Endothelial cell of umbilical vein (primary cell): ENCODE measurements at regions of chr3 and their contacts with region 1.

Region 1: GRCh38 chr3:178170698-178171535 is 365.3 kb upstream of the KCNMB2 start:
- DNase-seq: peak; percentile 96
- H3K4me3 ChIP-seq: no peak overlapping the region
- H3K27ac ChIP-seq: peak overlapping the region; percentile 85
- H3K4me1 ChIP-seq: peaks cover 27% of the 10 kb centered on the region
- H3K27me3 ChIP-seq: no peaks in the 10 kb centered on the region
- CTCF ChIP-seq: no peak
- POLR2A ChIP-seq: peak; percentile 91

Region 2: GRCh38 chr3:177197041-177197727 is 973.7 kb before region 1 on chr3 and contains the start of gene TBL1XR1:
- CTCF ChIA-PET with region 1: no interaction called
- POLR2A ChIA-PET with region 1: no interaction called
- dilution Hi-C with region 1: no loop called
- intact Hi-C with region 1: loop called (anchors 1 kb)
- DNase-seq: peak; percentile 91
- H3K4me3 ChIP-seq: peak within 1 kb of the TSS; percentile 84 to 97 (median 95)
- H3K27ac ChIP-seq: peak within 1 kb of the TSS; percentile 93
- H3K4me1 ChIP-seq: peaks cover 32% of the 10 kb centered on the region
- H3K27me3 ChIP-seq: no peaks in the 10 kb centered on the region
- CTCF ChIP-seq: no peak
- POLR2A ChIP-seq: no peak
- total RNA-seq, gene TBL1XR1: 146 and 152 TPM in 2 replicates

Region 3: DNA sequence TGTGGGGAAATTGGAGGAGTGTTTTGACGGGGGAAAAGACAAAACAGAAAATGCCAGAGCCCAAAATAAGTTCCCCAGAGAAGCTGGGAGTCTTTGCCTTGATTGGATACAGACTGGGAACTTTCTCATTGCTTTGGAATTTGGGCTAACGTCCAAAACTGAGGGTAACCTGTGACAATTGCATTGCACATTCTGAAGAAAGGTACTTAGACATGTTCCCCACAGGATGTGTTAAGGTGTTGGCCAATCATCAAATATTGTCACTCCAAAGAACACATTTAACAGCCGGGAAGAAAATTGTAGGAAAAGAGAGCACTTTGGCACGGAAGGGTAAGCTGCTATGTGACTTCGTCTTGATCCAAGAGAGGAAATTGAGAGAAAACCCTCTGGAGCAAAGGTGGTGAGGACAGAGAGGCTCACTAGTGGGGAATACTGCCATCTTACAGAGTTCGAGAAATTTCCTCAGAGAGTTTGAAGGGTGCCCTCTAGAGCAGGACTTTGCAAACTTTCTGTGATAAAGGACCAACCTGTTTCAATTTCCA is 354.2 kb before region 1 on chr3:
- CTCF ChIA-PET with region 1: no interaction called
- POLR2A ChIA-PET with region 1: no interaction called
- dilution Hi-C with region 1: no loop called
- intact Hi-C with region 1: loop called (anchors 10 kb)
- DNase-seq: peak; percentile 62
- H3K4me3 ChIP-seq: no peak overlapping the region
- H3K27ac ChIP-seq: no peak overlapping the region
- H3K4me1 ChIP-seq: peaks cover 18% of the 10 kb centered on the region
- H3K27me3 ChIP-seq: no peaks in the 10 kb centered on the region
- CTCF ChIP-seq: no peak
- POLR2A ChIP-seq: no peak

Region 4: GRCh38 chr3:178022599-178022998 is 148.3 kb before region 1 on chr3:
- CTCF ChIA-PET with region 1: no interaction called
- POLR2A ChIA-PET with region 1: no interaction called
- dilution Hi-C with region 1: no loop called
- intact Hi-C with region 1: loop called (anchors 5 kb)
- DNase-seq: no peak
- H3K4me3 ChIP-seq: no peak overlapping the region
- H3K27ac ChIP-seq: no peak overlapping the region
- H3K4me1 ChIP-seq: no peaks in the 10 kb centered on the region
- H3K27me3 ChIP-seq: no peaks in the 10 kb centered on the region
- CTCF ChIP-seq: no peak
- POLR2A ChIP-seq: no peak

Region 5: DNA sequence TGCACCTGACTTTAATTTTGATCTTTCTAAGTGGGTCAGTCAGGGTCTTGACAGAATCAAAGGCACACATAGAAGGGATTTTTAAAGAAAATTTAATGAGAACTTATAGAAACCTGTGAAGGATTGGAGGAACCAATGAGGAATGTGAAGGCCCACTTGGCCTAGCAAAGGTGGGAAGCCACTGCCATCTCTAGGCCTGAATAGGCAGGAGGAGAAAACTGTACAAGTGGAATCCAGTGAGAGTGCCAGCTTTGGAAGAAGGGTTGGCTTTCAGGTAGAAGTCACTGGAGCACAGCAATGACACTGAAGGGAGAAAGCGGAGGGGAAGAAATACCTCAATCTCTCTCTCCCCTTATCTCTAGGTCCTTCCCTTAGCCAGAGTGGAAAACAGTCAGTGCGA is 15.4 kb before region 1 on chr3:
- CTCF ChIA-PET with region 1: interaction called, 13 read pairs
- POLR2A ChIA-PET with region 1: no interaction called
- dilution Hi-C with region 1: no loop called
- intact Hi-C with region 1: loop called (anchors 1 kb)
- DNase-seq: no peak
- H3K4me3 ChIP-seq: no peak overlapping the region
- H3K27ac ChIP-seq: no peak overlapping the region
- H3K4me1 ChIP-seq: peaks cover 20% of the 10 kb centered on the region
- H3K27me3 ChIP-seq: no peaks in the 10 kb centered on the region
- CTCF ChIP-seq: no peak
- POLR2A ChIP-seq: no peak

Region 6: DNA sequence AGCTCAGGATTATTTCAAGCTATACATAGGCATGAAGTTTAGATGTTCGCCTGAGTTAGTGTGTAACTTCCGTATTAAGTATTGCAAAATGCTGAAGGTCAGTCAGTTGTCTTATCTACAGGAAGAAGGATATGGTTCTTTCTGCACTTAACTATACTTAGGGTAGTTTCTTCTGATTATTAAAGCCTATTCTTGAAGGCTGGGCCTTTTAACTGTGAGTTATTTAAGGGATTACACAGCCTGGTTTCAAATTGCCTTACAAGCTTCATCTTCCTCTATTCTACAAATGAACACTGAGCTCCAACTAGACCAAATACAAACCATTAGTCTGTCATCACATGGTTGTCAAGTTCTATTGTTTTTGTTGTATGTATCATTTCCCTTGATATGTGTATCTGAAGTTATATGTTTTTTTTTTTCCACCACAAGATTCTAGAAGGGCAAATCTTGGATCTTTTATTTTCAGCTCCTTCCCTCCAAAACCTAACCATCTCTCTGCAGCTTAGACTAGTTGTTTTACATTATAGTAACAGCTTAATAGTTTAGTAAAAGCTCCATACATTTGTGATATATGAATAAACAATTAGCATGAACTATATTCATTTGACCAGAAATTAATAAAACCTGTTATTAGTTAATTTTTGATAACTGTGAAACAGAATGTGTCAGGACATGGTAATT is 92.5 kb after region 1 on chr3:
- CTCF ChIA-PET with region 1: interaction called, 5 read pairs
- POLR2A ChIA-PET with region 1: no interaction called
- dilution Hi-C with region 1: no loop called
- intact Hi-C with region 1: loop called (anchors 2 kb)
- DNase-seq: peak; percentile 88
- H3K4me3 ChIP-seq: no peak overlapping the region
- H3K27ac ChIP-seq: peak overlapping the region; percentile 55
- H3K4me1 ChIP-seq: peaks cover 17% of the 10 kb centered on the region
- H3K27me3 ChIP-seq: no peaks in the 10 kb centered on the region
- CTCF ChIP-seq: no peak
- POLR2A ChIP-seq: no peak